Dendritic cell treated with granulocyte-macrophage colony-stimulating factor and Interleukin-4, amounts not matched to agents 40 ng/mL and 50 ng/mL, for 4 days (primary cell): ENCODE measurements at regions of chr16 and their contacts with region 1.

Region 1: GRCh38 chr16:56700195-56700594 is 17.9 kb downstream of the MT1X start:
- H3K4me3 Mint-ChIP-seq: no peak overlapping the region
- H3K27ac Mint-ChIP-seq: no peak overlapping the region
- H3K4me1 Mint-ChIP-seq: no peaks in the 10 kb centered on the region
- H3K27me3 Mint-ChIP-seq: peaks cover 5% of the 10 kb centered on the region

Region 2: GRCh38 chr16:56513972-56514371 is 186.2 kb before region 1 on chr16:
- intact Hi-C with region 1: loop called (anchors 5 kb)
- H3K4me3 Mint-ChIP-seq: no peak overlapping the region
- H3K27ac Mint-ChIP-seq: no peak overlapping the region
- H3K4me1 Mint-ChIP-seq: peaks cover 13% of the 10 kb centered on the region
- H3K27me3 Mint-ChIP-seq: no peaks in the 10 kb centered on the region

Region 3: GRCh38 chr16:56576585-56577293 is 123.5 kb before region 1 on chr16:
- intact Hi-C with region 1: loop called (anchors 1 kb)
- H3K4me3 Mint-ChIP-seq: no peak overlapping the region
- H3K27ac Mint-ChIP-seq: no peak overlapping the region
- H3K4me1 Mint-ChIP-seq: no peaks in the 10 kb centered on the region
- H3K27me3 Mint-ChIP-seq: peaks cover 15% of the 10 kb centered on the region

Region 4: DNA sequence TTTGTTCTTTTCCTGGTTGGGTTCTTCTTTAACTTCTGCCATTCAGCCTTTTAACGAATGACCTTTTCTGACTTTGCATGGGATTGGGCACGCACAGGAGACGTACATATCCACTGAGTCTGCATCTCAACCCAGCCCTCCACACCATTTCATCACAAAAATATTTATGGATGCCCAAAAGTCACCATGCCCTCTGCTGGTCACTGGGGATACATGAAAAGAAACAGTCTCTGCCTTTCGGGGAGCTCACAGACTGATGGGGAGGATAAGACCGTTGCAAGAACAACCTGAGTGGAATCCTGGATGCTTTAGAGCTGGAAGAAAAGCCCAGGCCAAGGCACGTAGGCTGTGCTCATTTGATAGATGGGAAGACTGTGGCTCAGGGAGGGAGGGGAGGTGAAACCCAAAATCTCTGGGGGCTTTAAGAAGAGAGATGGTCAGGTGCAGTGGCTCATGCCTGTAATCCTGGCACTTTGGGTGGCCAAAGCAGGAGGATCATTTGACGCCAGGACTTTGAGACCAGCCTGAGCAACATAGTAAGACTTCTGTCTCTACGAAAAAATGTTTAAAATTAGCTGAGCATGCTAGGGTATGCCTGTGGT is 99.7 kb before region 1 on chr16:
- intact Hi-C with region 1: loop called (anchors 2 kb)
- H3K4me3 Mint-ChIP-seq: no peak overlapping the region
- H3K27ac Mint-ChIP-seq: no peak overlapping the region
- H3K4me1 Mint-ChIP-seq: no peaks in the 10 kb centered on the region
- H3K27me3 Mint-ChIP-seq: peaks cover 40% of the 10 kb centered on the region

Region 5: GRCh38 chr16:56681939-56682702 is 18.1 kb before region 1 on chr16 and contains the start of gene MT1X:
- intact Hi-C with region 1: no loop called
- H3K4me3 Mint-ChIP-seq: peak within 1 kb of the TSS; percentile 87
- H3K27ac Mint-ChIP-seq: peak within 1 kb of the TSS; percentile 89
- H3K4me1 Mint-ChIP-seq: peaks cover 27% of the 10 kb centered on the region
- H3K27me3 Mint-ChIP-seq: peaks cover 28% of the 10 kb centered on the region